ENCODE measurements at regions of chr2 and their contacts with region 1.

Region 1: GRCh38 chr2:11688222-11689069 is 18.5 kb upstream of the NTSR2 start:
- DNase-seq: peak; percentile 80
- CTCF ChIP-seq: peak; percentile 83

Region 2: DNA sequence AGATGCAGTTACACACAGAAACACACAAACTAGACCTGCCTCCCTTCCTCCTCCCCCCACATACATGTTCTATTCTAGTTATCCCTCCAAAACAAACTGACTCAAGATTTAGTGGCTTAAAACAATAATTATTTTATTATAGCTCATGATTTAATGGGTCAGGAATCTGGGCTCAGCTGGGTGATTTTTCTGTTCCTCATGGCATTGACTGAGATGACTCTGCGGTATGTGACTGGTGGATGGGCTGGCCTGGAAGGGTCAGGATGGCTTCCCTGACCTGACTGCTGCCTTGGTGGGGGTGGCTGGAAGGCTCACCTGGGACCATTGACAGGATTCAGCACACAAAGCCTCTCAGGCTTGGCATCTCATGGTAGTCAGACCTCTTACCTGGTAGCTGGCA is 15.3 kb after region 1 on chr2:
- CTCF ChIA-PET with region 1: interaction called, 34 read pairs
- POLR2A ChIA-PET with region 1: no interaction called
- DNase-seq: no peak
- CTCF ChIP-seq: no peak

Region 3: GRCh38 chr2:11743846-11744553 is 55.6 kb after region 1 on chr2:
- CTCF ChIA-PET with region 1: interaction called, 18 read pairs
- POLR2A ChIA-PET with region 1: interaction called, 3 read pairs
- DNase-seq: peak; percentile 82
- CTCF ChIP-seq: no peak

Region 4: GRCh38 chr2:11778923-11779757 is 90.7 kb after region 1 on chr2:
- CTCF ChIA-PET with region 1: interaction called, 217 read pairs
- POLR2A ChIA-PET with region 1: no interaction called
- DNase-seq: peak; percentile 84
- CTCF ChIP-seq: peak; percentile 93